K562 (cell line): ENCODE measurements at regions of chr1 and their contacts with region 1.

Region 1: GRCh38 chr1:218304281-218305039 is 19.4 kb downstream of the RRP15 start:
- DNase-seq: peak; percentile 85 to 98 (median 90)
- ATAC-seq: peak; percentile 96
- H3K4me3 ChIP-seq: no peak overlapping the region
- H3K27ac ChIP-seq: peak overlapping the region; percentile 63
- H3K4me1 ChIP-seq: peaks cover 13 to 34% of the 10 kb centered on the region in 2 experiments
- H3K27me3 ChIP-seq: no peaks in the 10 kb centered on the region
- CTCF ChIP-seq: no peak
- EP300 ChIP-seq: peak; percentile 75
- POLR2A ChIP-seq: no peak
- RAD21 ChIP-seq: no peak; a peak in 1 of 4 replicates

Region 2: DNA sequence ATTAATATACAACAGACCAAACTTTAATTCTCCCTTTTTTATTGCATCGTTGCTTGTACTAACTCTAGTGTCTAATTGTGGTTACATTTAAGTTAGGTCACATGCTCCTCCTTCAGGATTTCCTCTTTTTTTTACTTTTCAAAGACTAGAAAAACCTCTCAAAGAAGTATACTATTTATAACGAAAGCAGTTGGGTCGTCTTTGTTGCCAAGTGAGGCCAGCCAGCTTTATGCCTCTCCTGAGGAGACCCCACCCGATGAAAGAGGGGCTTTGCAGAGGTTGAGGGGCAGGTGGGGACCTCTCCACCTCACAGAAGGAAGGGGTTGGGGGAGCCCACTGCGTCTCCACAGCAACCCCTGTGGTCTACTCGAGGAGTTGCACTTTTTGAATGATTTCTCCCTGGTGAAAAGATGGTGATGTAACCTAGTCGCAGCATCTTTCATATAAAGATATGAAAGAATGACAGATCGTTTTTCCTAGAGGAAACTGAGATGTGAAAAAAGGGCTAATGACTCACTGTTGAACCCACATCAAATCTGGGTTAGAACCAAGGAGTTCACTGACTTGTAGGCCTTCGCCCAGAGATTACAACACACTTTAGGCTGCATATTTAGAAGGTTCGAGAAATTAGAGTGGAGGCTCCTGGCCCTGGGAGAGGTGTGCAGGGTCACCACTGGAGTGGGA is 47.1 kb after region 1 on chr1:
- CTCF ChIA-PET with region 1: no interaction called
- POLR2A ChIA-PET with region 1: interaction called, 3 read pairs
- in situ Hi-C with region 1: no loop called
- intact Hi-C with region 1: loop called (anchors 2 kb)
- DNase-seq: peak in 2 of 4 experiments; percentile 32 to 33
- ATAC-seq: peak; percentile 86
- H3K4me3 ChIP-seq: no peak overlapping the region
- H3K27ac ChIP-seq: no peak overlapping the region
- H3K4me1 ChIP-seq: peaks cover 0 to 4% of the 10 kb centered on the region in 2 experiments; a peak in 1 of 5 replicates
- H3K27me3 ChIP-seq: no peaks in the 10 kb centered on the region
- CTCF ChIP-seq: peak; percentile 32 to 56 (median 40)
- EP300 ChIP-seq: no peak
- POLR2A ChIP-seq: no peak
- RAD21 ChIP-seq: peak in 1 of 2 experiments; percentile 25; a peak in 1 of 4 replicates

Region 3: GRCh38 chr1:218377143-218377660 is 72.7 kb after region 1 on chr1:
- CTCF ChIA-PET with region 1: no interaction called
- POLR2A ChIA-PET with region 1: no interaction called
- in situ Hi-C with region 1: no loop called
- intact Hi-C with region 1: no loop called
- DNase-seq: peak; percentile 20 to 49 (median 36)
- ATAC-seq: peak; percentile 54
- H3K4me3 ChIP-seq: no peak overlapping the region
- H3K27ac ChIP-seq: no peak overlapping the region
- H3K4me1 ChIP-seq: no peaks in the 10 kb centered on the region; a peak in 1 of 5 replicates
- H3K27me3 ChIP-seq: peaks cover 5 to 9% of the 10 kb centered on the region in 2 experiments; a peak in 3 of 5 replicates
- CTCF ChIP-seq: no peak
- EP300 ChIP-seq: no peak
- POLR2A ChIP-seq: no peak
- RAD21 ChIP-seq: no peak

Region 4: DNA sequence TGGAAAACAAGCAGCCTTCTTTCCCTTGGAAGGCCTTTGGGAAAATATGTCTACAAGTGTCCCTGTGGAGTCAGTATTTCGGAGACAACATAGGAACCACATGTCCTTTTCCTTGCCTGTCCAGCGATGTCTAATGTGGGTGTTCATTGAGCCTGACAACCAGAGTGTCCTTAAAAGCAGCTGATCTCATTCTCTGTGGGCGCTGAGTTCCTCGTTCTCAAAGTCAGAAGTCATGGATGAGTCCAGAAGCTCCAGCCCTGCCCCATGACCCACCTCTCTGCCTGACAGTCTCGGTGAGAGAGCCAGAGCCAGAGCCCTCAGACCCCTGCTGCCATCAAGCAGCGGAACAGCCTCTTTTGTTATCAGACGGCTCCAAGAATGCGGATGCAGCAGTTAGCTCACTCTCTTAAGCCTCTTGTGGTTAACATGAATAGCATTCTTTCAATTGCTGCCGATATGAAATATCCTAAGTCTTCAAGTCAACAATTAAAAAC is 369.9 kb after region 1 on chr1:
- CTCF ChIA-PET with region 1: no interaction called
- POLR2A ChIA-PET with region 1: no interaction called
- in situ Hi-C with region 1: no loop called
- intact Hi-C with region 1: no loop called
- DNase-seq: no peak
- ATAC-seq: no peak
- H3K4me3 ChIP-seq: no peak overlapping the region
- H3K27ac ChIP-seq: no peak overlapping the region
- H3K4me1 ChIP-seq: no peaks in the 10 kb centered on the region
- H3K27me3 ChIP-seq: no peaks in the 10 kb centered on the region
- CTCF ChIP-seq: no peak
- EP300 ChIP-seq: no peak
- POLR2A ChIP-seq: no peak
- RAD21 ChIP-seq: no peak